Activated CD4-positive, alpha-beta T cell treated with anti-CD3 and anti-CD28 coated beads, Interleukin-2, amount 10 ng/mL, durations not matched to agents 7 days and 5 days (primary cell): ENCODE measurements at regions of chr5 and their contacts with region 1.

Region 1: DNA sequence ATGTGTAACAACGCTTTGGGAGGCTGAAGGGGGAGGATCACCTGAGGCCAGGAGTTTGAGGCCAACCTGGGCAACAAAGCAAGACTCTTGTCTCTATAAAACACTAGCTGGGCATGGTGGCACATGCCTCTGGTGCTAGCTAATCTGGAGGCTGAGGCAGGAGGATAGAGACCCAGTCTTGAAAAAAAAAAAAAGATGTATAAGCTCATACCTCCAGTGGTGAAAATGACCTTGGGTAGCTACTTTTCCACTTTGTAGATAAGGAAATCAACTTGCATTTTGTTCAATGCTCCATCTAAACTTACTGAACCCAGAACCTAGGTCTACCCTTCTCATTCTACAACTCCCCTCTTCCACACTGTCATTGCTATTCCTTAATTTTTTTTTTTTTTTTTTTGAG is 16.5 kb downstream of the ARRDC3 start:
- DNase-seq: no peak
- H3K4me3 Mint-ChIP-seq: no peak overlapping the region
- H3K27ac Mint-ChIP-seq: no peak overlapping the region
- H3K4me1 Mint-ChIP-seq: peaks cover 6% of the 10 kb centered on the region
- H3K27me3 Mint-ChIP-seq: no peaks in the 10 kb centered on the region

Region 2: GRCh38 chr5:91180506-91180905 is 186.1 kb before region 1 on chr5:
- CTCF ChIA-PET with region 1: no interaction called
- POLR2A ChIA-PET with region 1: interaction called, 12 read pairs
- DNase-seq: no peak
- H3K4me3 Mint-ChIP-seq: no peak overlapping the region
- H3K27ac Mint-ChIP-seq: no peak overlapping the region
- H3K4me1 Mint-ChIP-seq: peaks cover 15% of the 10 kb centered on the region
- H3K27me3 Mint-ChIP-seq: peaks cover 2% of the 10 kb centered on the region

Region 3: GRCh38 chr5:91245871-91246270 is 120.7 kb before region 1 on chr5:
- CTCF ChIA-PET with region 1: no interaction called
- POLR2A ChIA-PET with region 1: no interaction called
- DNase-seq: no peak
- H3K4me3 Mint-ChIP-seq: no peak overlapping the region
- H3K27ac Mint-ChIP-seq: no peak overlapping the region
- H3K4me1 Mint-ChIP-seq: no peaks in the 10 kb centered on the region
- H3K27me3 Mint-ChIP-seq: peaks cover 6% of the 10 kb centered on the region

Region 4: GRCh38 chr5:91419571-91420537 is 53.3 kb after region 1 on chr5:
- CTCF ChIA-PET with region 1: no interaction called
- POLR2A ChIA-PET with region 1: no interaction called
- DNase-seq: peak; percentile 76
- H3K4me3 Mint-ChIP-seq: no peak overlapping the region
- H3K27ac Mint-ChIP-seq: no peak overlapping the region
- H3K4me1 Mint-ChIP-seq: peaks cover 3% of the 10 kb centered on the region
- H3K27me3 Mint-ChIP-seq: peaks cover 2% of the 10 kb centered on the region

Region 5: GRCh38 chr5:91528831-91529230 is 162.3 kb after region 1 on chr5:
- CTCF ChIA-PET with region 1: no interaction called
- POLR2A ChIA-PET with region 1: no interaction called
- DNase-seq: no peak
- H3K4me3 Mint-ChIP-seq: no peak overlapping the region
- H3K27ac Mint-ChIP-seq: no peak overlapping the region
- H3K4me1 Mint-ChIP-seq: no peaks in the 10 kb centered on the region
- H3K27me3 Mint-ChIP-seq: no peaks in the 10 kb centered on the region